IMR-90 (cell line): ENCODE measurements at regions of chr6 and their contacts with region 1.

Region 1: GRCh38 chr6:161498359-161498758 is 224.5 kb upstream of the AGPAT4 start:
- DNase-seq: peak; percentile 61
- ATAC-seq: peak; percentile 76
- H3K4me3 ChIP-seq: no peak overlapping the region
- H3K27ac ChIP-seq: no peak overlapping the region
- H3K4me1 ChIP-seq: no peaks in the 10 kb centered on the region
- H3K27me3 ChIP-seq: no peaks in the 10 kb centered on the region
- CTCF ChIP-seq: peak; percentile 45
- POLR2A ChIP-seq: no peak
- RAD21 ChIP-seq: peak; percentile 59

Region 2: GRCh38 chr6:161215193-161215592 is 283.2 kb before region 1 on chr6:
- CTCF ChIA-PET with region 1: no interaction called
- POLR2A ChIA-PET with region 1: no interaction called
- dilution Hi-C with region 1: no loop called
- in situ Hi-C with region 1: no loop called
- intact Hi-C with region 1: no loop called
- DNase-seq: peak; percentile 100
- ATAC-seq: peak; percentile 99
- H3K4me3 ChIP-seq: no peak overlapping the region
- H3K27ac ChIP-seq: no peak overlapping the region
- H3K4me1 ChIP-seq: peaks cover 6% of the 10 kb centered on the region
- H3K27me3 ChIP-seq: no peaks in the 10 kb centered on the region
- CTCF ChIP-seq: no peak
- POLR2A ChIP-seq: peak; percentile 52; the same call in 1 of the 2 replicates
- RAD21 ChIP-seq: peak; percentile 15; the same call in 1 of the 2 replicates

Region 3: DNA sequence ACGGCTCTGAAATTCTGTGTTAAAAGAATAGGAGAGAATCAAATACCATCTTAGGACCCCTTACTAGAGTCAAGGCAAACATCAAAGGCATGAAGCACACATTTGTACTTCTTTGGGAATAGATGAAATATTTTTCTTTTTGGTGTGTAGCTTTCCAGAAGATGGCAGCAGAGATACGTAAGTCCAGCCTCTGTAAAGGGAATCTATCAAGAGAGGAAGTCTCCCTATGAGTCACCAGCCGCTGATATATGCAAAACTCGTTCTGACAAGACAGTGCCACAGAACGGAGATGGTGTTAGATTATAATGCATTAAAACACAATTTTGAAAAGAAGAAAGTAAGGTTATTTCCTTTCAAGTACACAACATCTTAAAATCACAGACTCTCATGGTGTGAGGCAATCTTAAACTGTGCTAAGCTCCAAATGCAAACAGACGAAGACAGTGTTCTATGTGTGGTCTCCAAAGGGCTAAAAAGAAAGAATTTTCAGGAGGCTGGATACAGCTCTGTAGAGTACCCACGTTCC is 104.5 kb before region 1 on chr6:
- CTCF ChIA-PET with region 1: interaction called, 4 read pairs
- POLR2A ChIA-PET with region 1: no interaction called
- dilution Hi-C with region 1: no loop called
- in situ Hi-C with region 1: no loop called
- intact Hi-C with region 1: loop called (anchors 1 kb)
- DNase-seq: peak; percentile 90
- ATAC-seq: peak; percentile 98
- H3K4me3 ChIP-seq: no peak overlapping the region
- H3K27ac ChIP-seq: no peak overlapping the region
- H3K4me1 ChIP-seq: no peaks in the 10 kb centered on the region
- H3K27me3 ChIP-seq: no peaks in the 10 kb centered on the region; the same call in 1 of the 2 replicates
- CTCF ChIP-seq: peak; percentile 81
- POLR2A ChIP-seq: no peak
- RAD21 ChIP-seq: peak; percentile 88

Region 4: GRCh38 chr6:161400671-161401070 is 97.7 kb before region 1 on chr6:
- CTCF ChIA-PET with region 1: no interaction called
- POLR2A ChIA-PET with region 1: no interaction called
- dilution Hi-C with region 1: no loop called
- in situ Hi-C with region 1: loop called (anchors 5 kb)
- intact Hi-C with region 1: no loop called
- DNase-seq: no peak
- ATAC-seq: no peak
- H3K4me3 ChIP-seq: no peak overlapping the region
- H3K27ac ChIP-seq: no peak overlapping the region
- H3K4me1 ChIP-seq: no peaks in the 10 kb centered on the region
- H3K27me3 ChIP-seq: no peaks in the 10 kb centered on the region; the same call in 1 of the 2 replicates
- CTCF ChIP-seq: no peak
- POLR2A ChIP-seq: no peak
- RAD21 ChIP-seq: no peak

Region 5: DNA sequence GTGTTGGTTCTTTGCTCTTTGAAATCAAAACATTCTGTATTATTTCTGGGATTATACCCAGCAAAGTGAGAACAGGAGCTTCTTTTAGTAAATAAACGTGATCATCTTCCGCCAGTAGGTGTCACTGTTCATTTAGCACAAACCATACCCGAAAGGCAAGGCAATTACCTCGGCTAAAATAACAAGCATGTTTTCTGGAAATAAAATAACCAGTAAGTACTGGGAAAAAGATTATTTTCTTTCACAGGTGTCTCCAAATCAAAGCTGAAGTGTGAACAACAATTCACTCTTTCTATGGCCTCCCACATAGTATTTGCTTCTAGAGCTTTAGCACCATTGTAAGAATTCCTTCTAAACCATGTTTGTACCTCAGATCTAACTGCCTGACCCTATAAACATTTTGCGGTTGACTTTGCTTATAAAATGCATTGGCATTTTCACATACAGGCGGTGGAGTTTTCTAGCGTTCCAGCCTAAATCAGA is 79.9 kb before region 1 on chr6:
- CTCF ChIA-PET with region 1: interaction called, 3 read pairs
- POLR2A ChIA-PET with region 1: no interaction called
- dilution Hi-C with region 1: no loop called
- in situ Hi-C with region 1: no loop called
- intact Hi-C with region 1: loop called (anchors 1 kb)
- DNase-seq: peak; percentile 85
- ATAC-seq: peak; percentile 80
- H3K4me3 ChIP-seq: no peak overlapping the region
- H3K27ac ChIP-seq: no peak overlapping the region
- H3K4me1 ChIP-seq: peaks cover 2% of the 10 kb centered on the region; the same call in 1 of the 2 replicates
- H3K27me3 ChIP-seq: no peaks in the 10 kb centered on the region
- CTCF ChIP-seq: peak; percentile 74
- POLR2A ChIP-seq: no peak
- RAD21 ChIP-seq: peak; percentile 78